ENCODE measurements at regions of chr16 and their contacts with region 1.

Region 1: GRCh38 chr16:30740364-30741251 is 7.6 kb upstream of the PHKG2 start:
- DNase-seq: peak; percentile 95
- ATAC-seq: peak; percentile 79
- H3K4me3 ChIP-seq: peak overlapping the region; percentile 68
- H3K27ac ChIP-seq: peak overlapping the region; percentile 99
- H3K4me1 ChIP-seq: peaks cover 36% of the 10 kb centered on the region
- H3K27me3 ChIP-seq: no peaks in the 10 kb centered on the region
- CTCF ChIP-seq: no peak

Region 2: DNA sequence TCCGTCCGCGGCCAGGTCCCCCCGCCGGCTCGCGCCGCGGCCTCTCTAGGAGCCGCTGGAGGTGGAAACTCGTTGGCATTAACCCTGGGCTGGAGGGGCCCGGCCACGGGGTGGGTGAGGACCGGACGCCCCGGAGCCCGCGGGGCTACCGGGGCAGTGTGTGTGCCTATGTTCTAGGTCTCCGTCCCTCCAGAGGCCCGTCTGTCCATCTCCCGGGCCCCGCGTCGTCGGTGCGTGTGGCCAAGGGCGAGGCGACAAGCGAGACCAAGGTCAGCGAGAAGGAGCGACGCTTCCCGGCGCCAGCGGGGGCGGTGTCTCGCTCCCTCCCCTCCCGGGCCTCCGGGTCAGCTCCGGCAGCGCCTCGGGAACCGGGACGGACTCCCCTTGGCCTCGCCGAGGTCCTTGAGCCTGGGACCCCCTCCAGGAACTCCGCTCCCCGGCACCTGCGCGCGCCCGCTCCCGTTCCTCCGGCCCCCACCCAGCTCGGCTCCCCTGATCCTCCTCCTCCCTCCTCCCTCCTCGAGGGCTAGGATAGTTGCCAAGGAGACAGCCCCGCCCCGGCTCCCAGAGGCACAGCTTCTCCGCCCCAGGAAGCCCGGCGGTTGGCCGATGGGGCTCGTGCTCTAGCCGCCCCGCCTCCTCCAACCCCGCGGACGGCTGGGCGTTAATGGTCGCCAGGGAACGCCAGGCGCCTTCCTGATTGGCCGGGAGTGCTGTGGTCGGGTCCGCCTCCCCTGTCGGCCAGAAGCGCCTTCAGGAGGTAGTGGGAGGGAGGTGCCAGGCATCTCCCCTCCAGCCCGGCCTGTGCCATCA is 213.6 kb before region 1 on chr16:
- CTCF ChIA-PET with region 1: no interaction called
- POLR2A ChIA-PET with region 1: no interaction called
- intact Hi-C with region 1: no loop called
- DNase-seq: peak; percentile 95
- ATAC-seq: peak; percentile 89
- H3K4me3 ChIP-seq: peak overlapping the region; percentile 89
- H3K27ac ChIP-seq: peak overlapping the region; percentile 88
- H3K4me1 ChIP-seq: peaks cover 7% of the 10 kb centered on the region
- H3K27me3 ChIP-seq: no peaks in the 10 kb centered on the region
- CTCF ChIP-seq: peak; percentile 21; the same call in 1 of the 2 replicates

Region 3: GRCh38 chr16:30813821-30814189 is 73.2 kb after region 1 on chr16:
- CTCF ChIA-PET with region 1: no interaction called
- POLR2A ChIA-PET with region 1: no interaction called
- intact Hi-C with region 1: loop called (anchors 2 kb)
- DNase-seq: no peak
- ATAC-seq: no peak
- H3K4me3 ChIP-seq: peak overlapping the region; percentile 74
- H3K27ac ChIP-seq: 0 out of 2 replicates have a peak overlapping the region, but pooled peaks have one; percentile 8
- H3K4me1 ChIP-seq: peaks cover 10% of the 10 kb centered on the region
- H3K27me3 ChIP-seq: no peaks in the 10 kb centered on the region
- CTCF ChIP-seq: no peak

Measured in PC-3 (cell line).